Heart right ventricle (tissue), 16 donors: ENCODE measurements at regions of chr4 and their contacts with region 1.

Region 1: DNA sequence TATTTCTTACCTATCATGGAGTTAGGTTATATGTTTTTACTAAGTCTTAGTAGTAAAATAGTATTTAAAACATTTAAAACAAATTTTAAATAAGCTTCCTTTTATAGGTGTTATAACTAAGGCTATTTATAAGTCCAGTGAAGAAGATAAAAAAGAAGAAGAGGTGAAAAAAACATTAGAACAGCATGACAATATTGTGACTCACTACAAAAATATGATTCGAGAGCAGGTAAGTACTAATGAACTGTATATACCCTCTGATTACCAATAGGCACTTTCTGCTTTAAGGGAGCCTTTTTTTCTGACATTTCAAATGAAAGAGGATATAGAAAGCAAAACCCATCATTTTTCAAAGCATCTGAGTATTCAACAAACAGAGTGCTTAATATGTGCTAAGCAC is 76.6 kb downstream of the USO1 start:
- DNase-seq: no peak
- ATAC-seq: no peak
- H3K4me3 ChIP-seq: no peak overlapping the region
- H3K27ac ChIP-seq: no peak overlapping the region
- H3K4me1 ChIP-seq: no peaks in the 10 kb centered on the region
- H3K27me3 ChIP-seq: no peaks in the 10 kb centered on the region
- CTCF ChIP-seq: no peak

Region 2: GRCh38 chr4:75653845-75654503 is 147.0 kb before region 1 on chr4:
- intact Hi-C with region 1: loop called in 1 of 10 experiments (anchors 10 kb)
- DNase-seq: no peak
- ATAC-seq: peak in 4 of 8 donors; percentile 51 to 61 (median 54)
- H3K4me3 ChIP-seq: no peak overlapping the region
- H3K27ac ChIP-seq: no peak overlapping the region
- H3K4me1 ChIP-seq: peaks cover 0 to 6% (median 0%) of the 10 kb centered on the region in 9 donors
- H3K27me3 ChIP-seq: no peaks in the 10 kb centered on the region
- CTCF ChIP-seq: peak; percentile 18 to 65 (median 47)

Region 3: DNA sequence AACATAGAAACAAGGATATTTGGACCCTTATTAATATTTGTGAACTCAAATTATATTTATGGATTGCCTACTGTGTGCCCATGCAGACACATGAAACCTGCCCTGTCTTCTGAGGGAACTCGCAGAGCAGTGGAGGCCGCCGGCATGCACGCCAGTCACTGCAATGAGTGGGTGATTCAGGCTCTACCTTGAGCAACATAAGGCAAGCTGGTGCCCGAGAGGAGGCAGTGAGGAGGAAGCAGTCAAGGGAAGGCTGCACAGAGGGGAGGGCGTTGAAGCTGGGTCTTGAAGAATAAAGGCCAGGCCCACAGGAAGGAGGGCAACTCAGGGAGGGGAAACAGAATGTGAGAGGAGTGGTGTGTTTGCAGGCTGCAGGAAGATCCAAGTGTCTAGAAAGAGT is 48.5 kb after region 1 on chr4:
- intact Hi-C with region 1: no loop called
- DNase-seq: no peak
- ATAC-seq: no peak
- H3K4me3 ChIP-seq: no peak overlapping the region
- H3K27ac ChIP-seq: no peak overlapping the region
- H3K4me1 ChIP-seq: peaks cover 0 to 14% (median 5%) of the 10 kb centered on the region in 9 donors
- H3K27me3 ChIP-seq: peaks cover 0 to 17% (median 0%) of the 10 kb centered on the region in 7 donors
- CTCF ChIP-seq: no peak

Region 4: GRCh38 chr4:75881476-75881875 is 80.5 kb after region 1 on chr4:
- intact Hi-C with region 1: no loop called
- DNase-seq: no peak
- ATAC-seq: no peak
- H3K4me3 ChIP-seq: no peak overlapping the region
- H3K27ac ChIP-seq: no peak overlapping the region
- H3K4me1 ChIP-seq: no peaks in the 10 kb centered on the region
- H3K27me3 ChIP-seq: peaks cover 0 to 40% (median 10%) of the 10 kb centered on the region in 7 donors
- CTCF ChIP-seq: no peak

Region 5: GRCh38 chr4:75940692-75941253 is 139.8 kb after region 1 on chr4 and contains the start of gene NAAA:
- intact Hi-C with region 1: loop called in 1 of 10 experiments (anchors 10 kb)
- DNase-seq: peak; percentile 82 to 86
- ATAC-seq: peak; percentile 78 to 97 (median 92)
- H3K4me3 ChIP-seq: peak within 1 kb of the TSS; percentile 70 to 98 (median 76)
- H3K27ac ChIP-seq: peak within 1 kb of the TSS; percentile 46 to 92 (median 76)
- H3K4me1 ChIP-seq: peaks cover 0 to 17% (median 10%) of the 10 kb centered on the region in 9 donors
- H3K27me3 ChIP-seq: no peaks in the 10 kb centered on the region
- CTCF ChIP-seq: peak in 6 of 9 donors; percentile 13 to 69 (median 49)
- total RNA-seq, gene NAAA: 6.4 to 27.4 (median 14.5) TPM